CD8-positive, alpha-beta T cell (primary cell): ENCODE measurements at regions of chr9 and their contacts with region 1.

Region 1: DNA sequence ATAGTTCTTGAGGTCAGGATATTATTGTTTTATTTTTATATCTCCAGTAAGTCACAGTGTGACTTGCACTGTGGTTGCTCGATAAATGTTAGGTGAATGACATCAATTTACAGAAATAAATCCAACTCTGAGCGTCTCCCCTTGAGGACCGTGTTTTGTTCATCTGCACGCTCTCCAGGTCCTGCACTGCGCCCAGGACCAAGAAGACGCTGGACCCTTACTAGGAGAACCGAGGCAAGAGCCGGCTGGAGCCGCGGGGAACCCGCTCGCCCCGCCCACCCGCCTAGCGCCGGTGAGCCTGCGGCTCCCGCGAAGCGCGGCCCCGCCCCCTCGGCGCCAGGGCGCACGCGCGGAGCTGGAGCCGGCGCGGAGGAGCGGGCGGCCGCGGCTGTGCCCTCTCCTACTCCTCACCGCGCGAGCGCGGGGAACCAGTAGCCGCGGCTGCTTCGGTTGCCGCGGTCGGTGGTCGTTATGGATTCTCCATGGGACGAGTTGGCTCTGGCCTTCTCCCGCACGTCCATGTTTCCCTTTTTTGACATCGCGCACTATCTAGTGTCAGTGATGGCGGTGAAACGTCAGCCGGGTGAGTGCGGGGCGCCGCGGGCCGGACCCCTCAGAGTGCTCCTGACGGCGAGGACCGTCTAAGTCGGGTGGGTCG is at the start of gene TMEM38B:
- DNase-seq: peak; percentile 54 to 91 (median 73)
- ATAC-seq: peak; percentile 90
- H3K4me3 ChIP-seq: peak within 1 kb of the TSS; percentile 69 to 78
- H3K4me3 Mint-ChIP-seq: peak within 1 kb of the TSS; percentile 90
- H3K27ac ChIP-seq: peak within 1 kb of the TSS; percentile 20 to 58
- H3K27ac Mint-ChIP-seq: peak within 1 kb of the TSS; percentile 73
- H3K4me1 ChIP-seq: peaks cover 15% of the 10 kb centered on the region
- H3K4me1 Mint-ChIP-seq: peaks cover 32% of the 10 kb centered on the region
- H3K27me3 ChIP-seq: peaks cover 0 to 13% of the 10 kb centered on the region in 2 experiments
- H3K27me3 Mint-ChIP-seq: peaks cover 32% of the 10 kb centered on the region
- CTCF ChIP-seq: no peak
- total RNA-seq, gene TMEM38B: 9.5 to 14.1 TPM

Region 2: GRCh38 chr9:104093647-104094533 is 1600.4 kb before region 1 on chr9 and contains the start of gene SMC2:
- CTCF ChIA-PET with region 1: no interaction called
- POLR2A ChIA-PET with region 1: no interaction called
- intact Hi-C with region 1: loop called in 1 of 2 experiments (anchors 5 kb)
- DNase-seq: peak; percentile 90 to 96 (median 94)
- ATAC-seq: peak; percentile 96
- H3K4me3 ChIP-seq: peak within 1 kb of the TSS; percentile 58 to 79
- H3K4me3 Mint-ChIP-seq: peak within 1 kb of the TSS; percentile 98
- H3K27ac ChIP-seq: peak within 1 kb of the TSS; percentile 78 to 98
- H3K27ac Mint-ChIP-seq: peak within 1 kb of the TSS; percentile 98
- H3K4me1 ChIP-seq: peaks cover 21% of the 10 kb centered on the region
- H3K4me1 Mint-ChIP-seq: peaks cover 44% of the 10 kb centered on the region
- H3K27me3 ChIP-seq: no peaks in the 10 kb centered on the region
- H3K27me3 Mint-ChIP-seq: no peaks in the 10 kb centered on the region
- CTCF ChIP-seq: no peak
- total RNA-seq, gene SMC2: 1.9 to 2.0 TPM

Region 3: GRCh38 chr9:105447814-105448812 is 246.2 kb before region 1 on chr9 and contains the start of gene FSD1L:
- CTCF ChIA-PET with region 1: no interaction called
- POLR2A ChIA-PET with region 1: no interaction called
- intact Hi-C with region 1: loop called in 1 of 2 experiments (anchors 1 kb)
- DNase-seq: peak; percentile 45 to 89 (median 74)
- ATAC-seq: peak; percentile 90
- H3K4me3 ChIP-seq: peak within 1 kb of the TSS; percentile 62 to 76
- H3K4me3 Mint-ChIP-seq: peak within 1 kb of the TSS; percentile 81
- H3K27ac ChIP-seq: no peak within 1 kb of the TSS
- H3K27ac Mint-ChIP-seq: no peak within 1 kb of the TSS
- H3K4me1 ChIP-seq: no peaks in the 10 kb centered on the region
- H3K4me1 Mint-ChIP-seq: peaks cover 8% of the 10 kb centered on the region
- H3K27me3 ChIP-seq: no peaks in the 10 kb centered on the region
- H3K27me3 Mint-ChIP-seq: no peaks in the 10 kb centered on the region
- CTCF ChIP-seq: no peak
- total RNA-seq, gene FSD1L: 0.24 to 0.33 TPM